ENCODE measurements at regions of chr2 and their contacts with region 1.

Region 1: DNA sequence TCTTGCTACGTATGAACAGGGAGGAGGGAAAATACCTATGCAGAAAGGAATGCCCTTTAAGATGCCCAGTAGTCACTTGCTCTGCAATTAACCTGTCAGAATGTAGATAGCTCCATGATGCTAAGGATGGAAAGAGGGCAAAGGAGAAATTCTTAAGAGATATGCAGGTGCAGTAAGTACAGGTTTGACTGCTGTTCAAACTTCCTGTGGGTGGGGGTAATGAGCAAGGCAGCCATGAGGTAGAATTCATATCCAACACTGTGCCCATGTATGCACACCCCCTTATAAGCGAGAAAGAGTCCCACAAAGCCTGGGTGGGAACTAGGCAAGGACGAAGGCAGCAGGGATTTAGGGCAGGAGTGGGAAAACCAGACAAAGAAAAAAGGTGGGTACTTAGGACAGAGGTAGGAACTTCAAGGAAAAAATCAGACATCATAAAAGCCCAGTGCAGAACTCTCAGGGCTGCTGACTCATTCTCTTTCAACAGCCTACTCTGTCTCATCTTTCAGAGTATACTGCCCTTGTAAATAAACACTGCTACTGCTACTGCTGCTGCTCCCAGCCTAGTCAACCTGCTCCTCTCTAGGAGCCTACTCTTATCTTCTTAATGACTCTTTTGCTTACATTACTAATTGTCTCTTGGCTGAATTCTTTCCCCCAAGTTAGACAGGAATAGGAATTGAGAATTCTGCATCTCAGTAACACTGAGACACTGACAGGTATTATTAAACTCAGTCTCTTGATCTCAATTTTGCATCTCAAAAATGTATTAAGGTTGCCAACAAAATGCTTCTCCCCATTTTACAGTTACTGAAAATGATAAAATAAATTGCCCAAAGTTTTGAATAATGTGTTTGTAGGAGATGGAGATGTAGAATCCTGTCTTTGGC is 189.0 kb downstream of the PTH2R start:
- DNase-seq: peak; percentile 21
- H3K4me3 ChIP-seq: no peak overlapping the region
- H3K27ac ChIP-seq: peak overlapping the region in 3 of 4 donors; percentile 32 to 55 (median 52)
- H3K4me1 ChIP-seq: peaks cover 0 to 13% (median 2%) of the 10 kb centered on the region in 4 donors
- H3K27me3 ChIP-seq: no peaks in the 10 kb centered on the region
- CTCF ChIP-seq: no peak
- EP300 ChIP-seq: no peak
- POLR2A ChIP-seq: no peak

Region 2: DNA sequence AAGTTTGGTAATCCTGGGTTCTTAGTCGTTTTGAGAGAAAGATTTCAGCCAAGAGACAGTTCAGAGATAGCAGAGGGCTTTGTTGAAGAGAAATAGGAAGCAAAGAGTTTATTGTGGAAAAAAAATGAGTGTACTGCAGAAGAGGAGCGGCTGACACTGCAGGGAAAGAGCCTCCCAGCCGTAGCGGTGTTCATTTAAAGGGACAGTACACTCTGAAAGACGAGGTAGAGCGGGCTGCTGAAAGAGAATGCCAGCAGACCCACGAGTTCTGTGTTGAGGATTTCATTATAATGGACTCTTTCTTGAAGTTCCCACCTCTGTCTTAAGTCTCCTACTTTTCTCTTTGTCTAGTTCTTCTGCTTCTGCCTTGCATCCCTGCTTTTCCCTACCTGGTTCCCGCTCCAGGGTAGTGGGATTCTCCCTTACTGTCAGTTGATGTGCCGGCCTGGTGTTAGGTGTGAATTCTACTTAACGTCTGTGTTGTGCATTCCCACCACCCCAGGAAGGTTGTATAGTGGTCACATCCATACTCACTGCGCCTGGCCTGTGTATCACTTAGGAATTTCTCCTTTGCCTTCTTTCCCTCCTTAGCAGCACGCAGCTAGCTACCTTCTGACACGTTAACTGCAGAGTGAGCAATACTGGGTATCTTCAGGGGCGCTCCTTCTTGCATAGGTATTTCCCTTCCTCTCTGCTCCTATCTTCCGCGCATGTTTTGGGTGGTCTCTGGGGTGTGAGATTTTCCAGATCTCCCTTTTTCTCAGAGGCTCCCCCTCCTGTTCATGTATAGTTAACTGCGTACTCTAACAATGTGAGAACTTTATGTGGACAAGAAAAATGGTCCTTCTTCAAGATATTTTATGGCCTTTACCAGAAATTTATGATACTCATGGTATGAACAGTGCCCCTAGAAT is 24.5 kb before region 1 on chr2:
- in situ Hi-C with region 1: no loop called
- intact Hi-C with region 1: loop called (anchors 1 kb)
- DNase-seq: no peak
- H3K4me3 ChIP-seq: no peak overlapping the region
- H3K27ac ChIP-seq: no peak overlapping the region
- H3K4me1 ChIP-seq: peaks cover 0 to 17% (median 3%) of the 10 kb centered on the region in 4 donors
- H3K27me3 ChIP-seq: no peaks in the 10 kb centered on the region
- CTCF ChIP-seq: no peak
- EP300 ChIP-seq: no peak
- POLR2A ChIP-seq: no peak

Region 3: DNA sequence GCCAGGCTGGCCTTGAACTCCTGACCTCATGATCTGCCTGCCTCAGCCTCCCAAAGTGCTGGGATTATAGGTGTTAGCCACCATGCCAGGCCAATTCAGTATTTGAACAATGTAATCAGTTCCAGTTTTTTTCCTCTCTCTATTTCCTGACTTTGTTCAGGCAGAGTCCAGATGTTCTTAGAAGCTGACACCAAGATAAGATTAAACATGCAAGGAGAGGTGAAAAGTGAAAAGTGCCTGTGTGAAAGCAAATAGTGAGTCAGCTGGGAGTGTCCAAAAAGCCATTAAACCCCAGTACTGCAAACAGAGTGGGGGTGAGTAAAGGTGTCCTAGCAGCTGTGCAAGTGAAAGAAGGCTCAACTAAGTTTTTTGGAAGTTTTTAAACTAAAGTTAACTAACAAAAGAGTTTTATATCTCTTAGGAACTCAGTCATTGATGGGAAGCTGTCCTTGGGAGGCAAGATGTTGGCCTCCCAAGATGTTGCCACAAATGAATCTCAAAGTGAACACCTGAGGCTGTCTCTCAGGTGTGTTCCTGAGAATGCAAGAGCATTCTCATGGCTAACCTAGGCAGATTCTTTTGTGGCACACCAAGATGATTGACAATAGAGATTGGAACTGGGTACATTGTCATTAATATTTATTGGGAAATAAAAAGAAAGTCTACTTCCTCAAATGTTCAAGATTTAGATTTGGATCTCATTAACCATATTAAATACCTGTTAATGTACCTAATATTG is 42.6 kb after region 1 on chr2:
- in situ Hi-C with region 1: no loop called
- intact Hi-C with region 1: no loop called
- DNase-seq: no peak
- H3K4me3 ChIP-seq: no peak overlapping the region
- H3K27ac ChIP-seq: peak overlapping the region in 1 of 4 donors; percentile 19
- H3K4me1 ChIP-seq: peaks cover 0 to 6% (median 0%) of the 10 kb centered on the region in 4 donors
- H3K27me3 ChIP-seq: no peaks in the 10 kb centered on the region
- CTCF ChIP-seq: no peak
- EP300 ChIP-seq: no peak
- POLR2A ChIP-seq: no peak